Astrocyte of the cerebellum (primary cell): ENCODE measurements at regions of chr4 and their contacts with region 1.

Region 1: DNA sequence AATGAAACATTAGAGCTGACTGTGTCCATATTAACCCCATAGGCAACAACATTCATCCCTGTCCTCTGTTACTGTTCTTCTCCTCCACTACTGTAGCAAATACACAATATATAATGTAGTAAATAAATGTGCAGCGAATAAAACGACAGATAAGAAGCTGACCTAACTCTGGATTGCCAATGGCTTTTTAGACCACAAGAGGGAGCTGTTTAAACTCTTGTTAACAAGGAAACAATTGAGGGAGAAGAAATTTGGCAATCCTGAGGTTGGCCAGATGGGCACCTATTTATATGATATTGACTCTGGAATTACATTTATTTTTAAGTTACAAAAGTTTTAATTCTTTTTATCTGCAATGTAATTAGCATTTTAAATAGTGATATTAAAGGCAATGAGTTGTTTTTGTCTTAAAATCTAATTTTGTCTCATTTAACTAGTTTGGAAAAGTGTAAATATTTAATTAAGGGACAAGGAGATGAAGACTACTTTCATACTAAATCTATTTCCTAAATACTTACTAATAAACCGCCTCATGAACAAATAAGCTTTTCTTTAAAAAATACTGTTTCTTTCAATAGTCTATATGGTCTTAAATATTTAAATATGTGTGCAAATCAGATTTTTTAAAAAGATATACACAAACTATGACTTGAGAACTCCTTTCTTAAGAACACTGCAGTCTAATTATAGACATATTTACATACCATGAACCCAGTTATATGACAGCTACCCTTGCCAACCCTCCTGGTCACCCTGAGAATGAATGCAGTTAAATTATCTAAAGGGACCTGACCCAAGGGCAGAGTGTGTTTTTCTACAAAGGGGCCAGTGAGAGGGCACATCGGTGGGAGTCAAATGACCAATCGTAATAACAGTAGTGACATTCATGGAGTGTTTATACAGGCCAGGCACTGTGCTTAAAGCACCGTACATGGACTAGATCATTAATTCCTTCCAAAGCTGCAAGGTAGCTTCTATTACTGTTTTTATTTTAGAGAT is 52.9 kb upstream of the HPF1 start:
- DNase-seq: peak; percentile 84
- H3K4me3 ChIP-seq: no peak overlapping the region
- CTCF ChIP-seq: peak; percentile 77

Region 2: DNA sequence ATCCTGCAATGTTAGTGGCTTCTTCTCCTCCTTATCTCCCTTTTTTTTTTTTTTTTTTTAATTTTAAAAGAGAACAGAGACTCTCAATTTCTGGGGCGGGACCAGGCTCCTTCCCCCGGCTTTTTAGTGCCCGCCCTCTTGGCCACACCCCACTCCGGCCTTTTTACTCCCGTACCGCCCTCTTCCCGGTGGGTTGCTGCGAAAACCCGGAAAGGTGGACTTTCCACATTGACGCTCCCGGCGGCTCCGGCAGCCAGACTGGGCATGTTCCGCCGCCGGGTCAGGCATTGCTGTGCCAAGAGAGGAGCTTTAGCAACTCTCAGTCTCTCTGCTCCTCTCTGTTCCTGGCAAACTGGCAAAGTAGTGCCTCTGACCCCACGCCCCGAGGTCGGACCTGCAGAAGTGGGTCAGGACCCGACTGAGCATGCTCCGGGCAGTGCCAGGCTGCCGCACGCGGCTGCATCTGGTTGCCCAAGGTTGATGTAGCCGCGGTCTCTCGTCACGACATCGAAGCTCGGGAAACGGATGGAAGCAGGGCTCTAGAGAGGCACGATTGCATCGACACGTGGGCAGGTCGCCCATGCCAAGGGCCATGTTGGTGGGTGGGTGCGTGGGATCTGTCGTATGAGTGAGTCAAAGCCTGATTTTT is 216.7 kb after region 1 on chr4:
- in situ Hi-C with region 1: loop called (anchors 25 kb)
- DNase-seq: peak; percentile 95
- H3K4me3 ChIP-seq: peak overlapping the region; percentile 84
- CTCF ChIP-seq: no peak